HEK293 (cell line): ENCODE measurements at regions of chr21 and their contacts with region 1.

Region 1: GRCh38 chr21:45439161-45439872 is 34.4 kb downstream of the COL18A1 start:
- H3K4me3 ChIP-seq: no peak overlapping the region
- H3K27ac ChIP-seq: no peak overlapping the region
- H3K4me1 ChIP-seq: no peaks in the 10 kb centered on the region
- CTCF ChIP-seq: peak; percentile 95

Region 2: GRCh38 chr21:45287438-45288391 is 151.6 kb before region 1 on chr21 and contains the start of gene POFUT2:
- CTCF ChIA-PET with region 1: interaction called, 52 read pairs
- POLR2A ChIA-PET with region 1: interaction called, 4 read pairs
- H3K4me3 ChIP-seq: peak within 1 kb of the TSS; percentile 78
- H3K27ac ChIP-seq: no peak within 1 kb of the TSS; the same call in 1 of the 2 replicates
- H3K4me1 ChIP-seq: no peaks in the 10 kb centered on the region; the same call in 1 of the 2 replicates
- CTCF ChIP-seq: peak; percentile 43

Region 3: DNA sequence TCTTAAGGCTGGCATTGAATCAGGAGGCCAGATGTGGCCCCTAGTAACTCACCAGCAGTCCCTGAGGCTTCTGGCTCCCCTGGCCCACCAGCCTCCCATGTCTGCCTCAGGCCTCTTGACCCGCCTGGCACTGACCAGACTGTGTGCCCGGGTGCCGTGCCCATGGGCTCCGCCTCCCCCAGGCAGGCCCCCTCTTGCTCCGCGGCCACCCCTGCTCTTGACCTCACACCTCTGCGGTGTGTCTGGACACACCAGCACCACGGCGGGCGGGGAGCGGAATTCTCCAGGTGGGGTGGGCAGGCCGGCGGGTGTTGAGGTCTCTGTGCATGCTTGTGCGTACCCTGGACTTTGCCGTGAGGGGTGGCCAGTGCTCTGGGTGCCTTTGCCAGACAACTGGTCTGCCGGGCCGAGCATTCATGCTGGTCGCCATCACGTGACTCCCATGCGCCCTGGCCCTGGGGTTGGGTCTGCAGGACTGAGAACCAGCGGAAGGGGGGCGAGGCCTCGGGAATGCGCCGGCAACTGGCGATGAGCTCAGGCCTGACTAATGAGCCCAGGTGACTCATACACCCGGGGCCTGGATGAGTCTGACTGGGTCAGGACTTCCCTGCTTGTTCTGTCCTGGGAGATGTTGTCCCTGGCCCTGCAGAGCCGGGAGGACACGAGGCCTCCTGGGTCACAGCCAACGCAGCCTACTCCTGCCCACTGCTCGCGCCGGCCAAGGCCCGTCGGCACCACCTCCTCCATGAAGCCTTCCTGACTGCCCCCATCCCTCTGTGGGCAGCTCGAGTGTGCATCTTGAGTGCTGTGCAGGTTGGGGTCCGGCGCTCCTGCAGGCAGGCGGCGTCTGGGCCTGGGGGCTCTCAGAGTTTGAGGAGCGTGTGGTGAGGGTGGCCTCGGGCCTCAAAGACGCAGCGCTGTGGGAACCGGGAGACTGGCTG is 11.7 kb before region 1 on chr21:
- CTCF ChIA-PET with region 1: interaction called, 10 read pairs
- POLR2A ChIA-PET with region 1: no interaction called
- H3K4me3 ChIP-seq: no peak overlapping the region
- H3K27ac ChIP-seq: no peak overlapping the region
- H3K4me1 ChIP-seq: 0 out of 2 replicates have a peak, but pooled peaks cover 2% of the 10 kb centered on the region
- CTCF ChIP-seq: no peak